Activated B cell treated with CpG ODN at 0.5 μM for 24 hours (primary cell): ENCODE measurements at regions of chr18 and their contacts with region 1.

Region 1: DNA sequence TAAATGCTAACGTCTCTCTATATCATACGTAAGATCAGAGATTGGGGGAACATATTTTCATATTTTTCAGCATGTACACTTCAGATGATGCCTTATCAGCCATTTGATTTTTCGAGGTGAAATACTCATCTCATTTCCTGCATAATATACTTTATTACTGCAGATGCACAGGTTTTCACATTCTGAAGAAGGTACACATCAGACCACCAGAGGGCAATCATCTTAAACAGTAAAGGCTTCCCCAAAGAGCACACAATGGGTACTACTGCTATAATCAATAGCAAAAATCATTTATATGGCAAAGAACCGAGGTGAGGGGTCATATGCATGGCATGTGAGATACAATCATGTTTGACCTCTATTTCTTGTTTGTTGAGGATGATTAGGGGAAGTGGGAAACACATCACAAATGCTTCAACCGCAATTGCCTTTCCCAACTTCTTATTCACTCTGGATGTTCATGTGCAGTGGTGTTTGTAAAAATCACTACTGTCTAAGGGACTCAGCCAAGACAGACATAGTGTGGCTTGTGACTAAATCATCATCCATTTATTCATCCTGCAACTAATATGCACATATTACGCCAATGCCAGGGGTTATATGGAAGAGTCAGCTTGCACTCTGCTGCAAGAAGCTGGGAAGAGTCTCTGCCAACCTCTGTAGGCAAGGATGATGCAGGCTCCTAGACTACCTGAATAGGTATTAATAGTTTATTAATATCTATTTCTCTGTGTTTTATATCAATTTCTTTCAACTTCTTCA is 118.7 kb downstream of the EPB41L3 start:
- DNase-seq: no peak
- ATAC-seq: no peak
- H3K4me3 Mint-ChIP-seq: no peak overlapping the region
- H3K27ac Mint-ChIP-seq: no peak overlapping the region
- H3K4me1 Mint-ChIP-seq: no peaks in the 10 kb centered on the region
- H3K27me3 Mint-ChIP-seq: peaks cover 3% of the 10 kb centered on the region
- CTCF ChIP-seq: no peak

Region 2: GRCh38 chr18:5073026-5073944 is 351.8 kb before region 1 on chr18:
- CTCF ChIA-PET with region 1: no interaction called
- POLR2A ChIA-PET with region 1: no interaction called
- intact Hi-C with region 1: loop called (anchors 2 kb)
- DNase-seq: no peak
- ATAC-seq: no peak
- H3K4me3 Mint-ChIP-seq: no peak overlapping the region
- H3K27ac Mint-ChIP-seq: no peak overlapping the region
- H3K4me1 Mint-ChIP-seq: no peaks in the 10 kb centered on the region
- H3K27me3 Mint-ChIP-seq: peaks cover 2% of the 10 kb centered on the region
- CTCF ChIP-seq: no peak

Region 3: GRCh38 chr18:6482198-6482977 is 1057.3 kb after region 1 on chr18:
- CTCF ChIA-PET with region 1: no interaction called
- POLR2A ChIA-PET with region 1: no interaction called
- intact Hi-C with region 1: loop called (anchors 5 kb)
- DNase-seq: peak; percentile 18
- ATAC-seq: peak; percentile 42
- H3K4me3 Mint-ChIP-seq: no peak overlapping the region
- H3K27ac Mint-ChIP-seq: no peak overlapping the region
- H3K4me1 Mint-ChIP-seq: no peaks in the 10 kb centered on the region
- H3K27me3 Mint-ChIP-seq: peaks cover 4% of the 10 kb centered on the region
- CTCF ChIP-seq: no peak

Region 4: DNA sequence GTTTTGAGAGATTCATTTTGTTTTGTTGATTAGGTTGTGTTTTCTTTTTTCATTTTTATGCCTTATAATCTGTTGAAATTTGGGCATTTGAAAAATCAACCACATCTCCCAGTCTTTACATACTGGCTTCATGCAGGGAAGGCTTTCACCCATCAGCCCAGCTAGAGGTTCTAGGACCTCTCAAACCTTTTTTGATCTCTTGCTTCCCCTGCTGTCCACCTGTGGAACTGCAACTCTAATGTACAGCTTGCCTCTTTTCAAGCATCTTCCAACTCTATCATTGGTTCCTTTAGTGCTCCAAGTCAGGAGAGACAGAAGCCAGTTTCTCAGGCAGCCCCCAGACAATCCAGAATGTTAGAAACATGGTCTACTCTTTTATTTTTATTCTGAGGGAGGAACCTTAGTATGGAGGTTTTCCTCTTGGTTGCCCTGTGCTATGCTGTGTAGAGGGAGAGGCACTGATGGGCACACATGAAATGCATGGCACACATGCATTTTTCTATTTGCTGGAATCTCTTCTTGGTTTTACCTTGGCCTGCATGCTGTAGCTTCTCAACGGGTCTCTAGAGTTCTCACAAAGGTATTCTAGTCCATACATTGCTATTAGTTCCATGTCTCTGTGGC is 1096.8 kb after region 1 on chr18:
- CTCF ChIA-PET with region 1: no interaction called
- POLR2A ChIA-PET with region 1: no interaction called
- intact Hi-C with region 1: loop called (anchors 10 kb)
- DNase-seq: no peak
- ATAC-seq: no peak
- H3K4me3 Mint-ChIP-seq: no peak overlapping the region
- H3K27ac Mint-ChIP-seq: no peak overlapping the region
- H3K4me1 Mint-ChIP-seq: no peaks in the 10 kb centered on the region
- H3K27me3 Mint-ChIP-seq: peaks cover 3% of the 10 kb centered on the region
- CTCF ChIP-seq: no peak